Activated naive CD4-positive, alpha-beta T cell treated with anti-CD3 and anti-CD28 coated beads for 36 hours (primary cell): ENCODE measurements at regions of chr11 and their contacts with region 1.

Region 1: DNA sequence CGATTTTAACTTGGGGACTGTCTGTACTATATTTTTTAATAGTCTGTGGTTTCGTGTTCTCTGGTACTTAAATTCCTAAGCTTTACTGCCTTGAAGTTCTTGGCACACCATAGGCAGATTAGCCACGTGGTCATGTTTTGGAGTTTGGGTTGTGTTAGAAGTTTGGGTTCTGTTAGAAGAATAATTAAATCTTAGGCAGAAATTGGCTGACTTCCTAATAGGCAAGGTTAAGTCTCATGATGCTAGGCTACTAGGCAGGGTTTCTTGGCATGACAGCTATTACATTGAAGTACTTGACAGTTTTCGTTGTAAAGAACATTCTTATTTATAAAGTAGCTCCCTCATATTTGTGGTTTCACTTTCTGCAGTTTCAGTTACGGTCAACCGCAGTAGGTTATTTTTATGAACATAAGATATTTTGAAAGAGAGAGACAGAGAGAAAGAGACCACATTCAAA is 30.0 kb upstream of the MMP7 start:
- DNase-seq: no peak
- H3K4me3 Mint-ChIP-seq: peak overlapping the region; percentile 35
- H3K27ac Mint-ChIP-seq: peak overlapping the region; percentile 39
- H3K4me1 Mint-ChIP-seq: peaks cover 41% of the 10 kb centered on the region
- H3K27me3 Mint-ChIP-seq: no peaks in the 10 kb centered on the region

Region 2: GRCh38 chr11:101914738-101915426 is 645.7 kb before region 1 on chr11 and contains the start of gene CEP126:
- CTCF ChIA-PET with region 1: no interaction called
- intact Hi-C with region 1: loop called (anchors 5 kb)
- DNase-seq: peak; percentile 96
- H3K4me3 Mint-ChIP-seq: peak within 1 kb of the TSS; percentile 87
- H3K27ac Mint-ChIP-seq: peak within 1 kb of the TSS; percentile 72
- H3K4me1 Mint-ChIP-seq: peaks cover 19% of the 10 kb centered on the region
- H3K27me3 Mint-ChIP-seq: no peaks in the 10 kb centered on the region
- total RNA-seq, gene CEP126: 1.1 to 1.2 TPM

Region 3: DNA sequence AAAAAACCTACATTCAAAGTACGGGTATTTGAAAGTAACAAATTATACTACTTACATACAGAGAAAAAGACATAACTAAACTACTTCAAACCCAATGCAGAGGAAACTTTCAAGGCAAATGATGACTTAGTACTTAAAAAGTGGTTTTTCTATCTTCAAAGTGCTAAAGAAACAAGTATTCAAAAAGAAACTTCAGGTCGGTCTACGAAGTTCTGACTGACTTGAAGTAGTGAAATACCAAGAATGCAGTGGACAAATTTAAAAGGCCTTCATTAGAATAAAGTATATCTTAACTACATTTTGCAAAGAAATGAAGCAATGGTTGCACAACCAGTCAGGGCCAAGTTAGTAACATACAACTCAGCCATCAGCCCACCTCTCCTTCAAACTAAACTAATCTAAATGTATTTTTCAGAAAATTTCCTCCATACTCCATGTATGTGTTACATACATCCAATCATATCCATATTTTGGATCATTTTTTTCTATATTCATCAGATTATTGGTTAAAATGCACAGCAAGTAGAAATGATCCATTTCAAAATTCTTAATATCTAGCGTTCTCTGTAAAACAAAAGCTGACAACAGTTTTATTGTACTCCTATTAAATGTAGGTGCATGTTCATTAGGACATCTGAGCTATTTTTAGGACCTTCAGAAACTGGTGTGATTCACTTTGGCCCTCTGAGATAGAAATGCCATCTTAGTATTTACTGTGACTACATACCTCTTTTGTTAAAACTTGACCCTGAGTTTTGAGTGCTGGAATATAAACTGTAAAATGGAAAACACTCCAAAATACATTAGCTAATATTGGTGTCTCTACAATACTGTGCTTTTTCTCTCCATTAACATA is 163.6 kb before region 1 on chr11:
- CTCF ChIA-PET with region 1: no interaction called
- intact Hi-C with region 1: loop called (anchors 1 kb)
- DNase-seq: no peak
- H3K4me3 Mint-ChIP-seq: no peak overlapping the region
- H3K27ac Mint-ChIP-seq: peak overlapping the region; percentile 63
- H3K4me1 Mint-ChIP-seq: peaks cover 48% of the 10 kb centered on the region
- H3K27me3 Mint-ChIP-seq: no peaks in the 10 kb centered on the region

Region 4: GRCh38 chr11:102580185-102580951 is 19.8 kb after region 1 on chr11:
- CTCF ChIA-PET with region 1: interaction called, 3 read pairs
- intact Hi-C with region 1: loop called (anchors 1 kb)
- DNase-seq: peak; percentile 30
- H3K4me3 Mint-ChIP-seq: no peak overlapping the region
- H3K27ac Mint-ChIP-seq: peak overlapping the region; percentile 15
- H3K4me1 Mint-ChIP-seq: peaks cover 29% of the 10 kb centered on the region
- H3K27me3 Mint-ChIP-seq: no peaks in the 10 kb centered on the region

Region 5: GRCh38 chr11:102599642-102600261 is 39.2 kb after region 1 on chr11:
- CTCF ChIA-PET with region 1: interaction called, 3 read pairs
- intact Hi-C with region 1: loop called (anchors 1 kb)
- DNase-seq: peak; percentile 43
- H3K4me3 Mint-ChIP-seq: no peak overlapping the region
- H3K27ac Mint-ChIP-seq: peak overlapping the region; percentile 75
- H3K4me1 Mint-ChIP-seq: peaks cover 27% of the 10 kb centered on the region
- H3K27me3 Mint-ChIP-seq: no peaks in the 10 kb centered on the region